ENCODE measurements at regions of chr10 and their contacts with region 1.

Region 1: GRCh38 chr10:96017191-96017687 is 26.1 kb upstream of the CCNJ start:
- DNase-seq: peak in 3 of 5 donors; percentile 2 to 45 (median 20)
- H3K4me3 ChIP-seq: no peak overlapping the region
- H3K4me3 Mint-ChIP-seq: no peak overlapping the region
- H3K27ac ChIP-seq: no peak overlapping the region
- H3K27ac Mint-ChIP-seq: no peak overlapping the region
- H3K4me1 ChIP-seq: no peaks in the 10 kb centered on the region
- H3K4me1 Mint-ChIP-seq: peaks cover 0 to 4% (median 0%) of the 10 kb centered on the region in 3 donors
- H3K27me3 ChIP-seq: no peaks in the 10 kb centered on the region
- H3K27me3 Mint-ChIP-seq: peaks cover 5 to 10% of the 10 kb centered on the region in 2 donors

Region 2: DNA sequence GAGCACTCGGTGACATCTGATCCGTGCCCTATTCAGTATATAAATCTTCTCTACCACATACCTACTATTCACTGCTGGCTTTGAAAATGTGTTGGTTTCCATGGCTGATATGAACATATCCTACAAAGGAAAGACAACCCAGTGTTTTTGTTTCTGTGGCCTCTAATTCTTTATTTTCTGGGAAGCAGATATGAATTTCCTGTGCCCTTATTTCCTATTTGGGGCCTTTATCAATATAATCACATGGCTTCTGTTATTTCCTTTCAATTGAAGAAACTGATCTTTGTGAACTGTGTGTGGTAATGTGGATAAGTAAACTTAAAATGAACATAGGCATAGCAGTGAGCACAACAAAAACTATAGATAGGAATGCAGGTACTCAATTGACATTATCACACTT is 36.7 kb after region 1 on chr10:
- CTCF ChIA-PET with region 1: no interaction called
- POLR2A ChIA-PET with region 1: no interaction called
- DNase-seq: no peak
- H3K4me3 ChIP-seq: no peak overlapping the region
- H3K4me3 Mint-ChIP-seq: no peak overlapping the region
- H3K27ac ChIP-seq: no peak overlapping the region
- H3K27ac Mint-ChIP-seq: no peak overlapping the region
- H3K4me1 ChIP-seq: no peaks in the 10 kb centered on the region
- H3K4me1 Mint-ChIP-seq: peaks cover 17 to 32% (median 20%) of the 10 kb centered on the region in 3 donors
- H3K27me3 ChIP-seq: no peaks in the 10 kb centered on the region
- H3K27me3 Mint-ChIP-seq: no peaks in the 10 kb centered on the region

Region 3: DNA sequence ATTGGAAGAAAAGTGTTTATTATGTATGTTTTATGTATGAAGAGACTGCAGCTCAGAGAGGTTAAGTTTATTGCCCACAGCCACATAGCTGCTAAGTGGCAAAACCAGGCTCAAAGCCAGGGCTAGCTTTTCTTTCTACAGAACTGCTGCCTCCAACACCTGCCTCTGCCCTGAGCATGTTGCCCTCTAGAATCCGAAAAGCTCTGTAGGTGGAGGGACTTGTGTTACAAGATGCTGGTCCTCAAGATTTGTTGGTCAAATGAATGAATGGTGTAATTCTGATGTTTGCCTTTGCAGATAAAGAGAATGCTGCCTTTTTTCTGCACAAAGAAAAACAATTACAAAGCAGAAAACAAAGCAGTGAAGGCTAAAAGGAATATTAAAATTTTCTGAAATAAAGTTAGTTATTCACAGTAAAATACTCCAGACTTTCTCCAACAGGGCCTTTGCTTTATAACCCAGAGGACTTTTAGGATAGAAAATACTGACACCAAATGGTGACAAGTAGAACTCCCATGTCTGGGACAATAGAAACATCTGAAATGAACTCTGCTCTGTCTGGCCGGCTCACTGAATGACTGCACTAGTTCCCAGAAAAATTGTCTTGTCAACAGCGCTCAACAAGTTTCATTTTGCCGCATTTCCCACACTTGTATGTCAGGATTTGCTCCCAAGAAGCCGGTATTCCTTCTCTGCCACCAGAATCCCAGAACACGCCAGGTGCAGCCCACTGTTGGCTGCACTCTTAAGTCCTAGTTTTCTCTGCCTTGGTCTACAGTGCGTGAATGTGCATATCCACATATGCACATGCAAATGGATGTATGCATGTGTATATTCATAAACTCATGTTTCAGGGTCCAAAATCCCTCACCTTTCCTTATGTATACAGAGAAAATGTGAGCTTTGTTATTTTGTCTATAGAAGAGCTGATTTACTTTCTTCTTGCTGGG is 276.0 kb after region 1 on chr10:
- CTCF ChIA-PET with region 1: interaction called, 10 read pairs
- POLR2A ChIA-PET with region 1: no interaction called
- DNase-seq: peak in 1 of 5 donors; percentile 24
- H3K4me3 ChIP-seq: no peak overlapping the region
- H3K4me3 Mint-ChIP-seq: no peak overlapping the region
- H3K27ac ChIP-seq: no peak overlapping the region
- H3K27ac Mint-ChIP-seq: no peak overlapping the region
- H3K4me1 ChIP-seq: peaks cover 17% of the 10 kb centered on the region
- H3K4me1 Mint-ChIP-seq: peaks cover 0 to 2% (median 1%) of the 10 kb centered on the region in 3 donors
- H3K27me3 ChIP-seq: no peaks in the 10 kb centered on the region
- H3K27me3 Mint-ChIP-seq: peaks cover 2 to 46% of the 10 kb centered on the region in 2 donors

Region 4: DNA sequence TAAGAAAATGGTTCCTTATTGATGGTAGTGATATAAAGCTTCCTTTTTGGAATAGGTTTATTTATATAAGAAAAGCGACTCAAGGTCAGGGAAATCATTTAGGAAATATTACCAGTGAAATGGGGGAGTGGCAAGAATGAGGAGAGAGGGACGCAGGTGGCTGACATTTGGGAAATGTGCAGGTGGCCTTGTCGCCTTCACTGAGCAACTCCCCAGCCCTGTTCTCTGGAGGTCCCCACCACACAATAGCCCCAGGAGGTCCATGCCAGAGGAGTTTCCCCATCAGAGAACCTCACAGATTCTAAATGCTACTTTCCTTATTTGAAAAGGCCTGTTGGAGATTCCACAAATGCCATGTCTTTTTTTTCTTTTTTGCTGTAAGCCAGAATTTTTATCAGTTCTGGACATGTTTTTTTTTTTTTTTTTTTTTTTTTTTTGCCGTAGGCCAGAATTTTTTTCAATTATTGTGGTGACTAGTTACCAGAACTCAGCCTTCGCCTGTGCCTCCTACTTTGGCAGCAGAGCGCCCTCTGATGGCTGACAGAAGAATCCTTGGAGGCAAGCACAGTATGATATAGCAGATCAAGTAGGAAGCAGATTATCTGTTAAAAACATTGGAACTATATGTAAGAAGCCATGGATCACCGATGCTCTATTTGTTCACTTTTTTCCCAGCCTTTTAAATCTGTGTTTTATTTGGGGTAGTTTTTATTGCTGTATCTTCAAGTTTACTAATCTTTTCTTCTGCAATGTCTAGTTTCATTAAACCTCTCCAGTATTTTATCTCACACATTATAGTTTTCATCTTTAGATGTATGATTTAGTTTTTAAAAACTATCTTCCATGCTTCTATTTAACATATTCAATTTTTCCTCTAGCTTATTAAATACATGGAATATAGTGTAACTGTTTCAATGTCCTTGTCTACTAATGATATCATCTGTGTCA is 323.0 kb after region 1 on chr10:
- CTCF ChIA-PET with region 1: interaction called, 14 read pairs
- POLR2A ChIA-PET with region 1: no interaction called
- DNase-seq: peak in 4 of 5 donors; percentile 14 to 62 (median 33)
- H3K4me3 ChIP-seq: no peak overlapping the region
- H3K4me3 Mint-ChIP-seq: no peak overlapping the region
- H3K27ac ChIP-seq: no peak overlapping the region
- H3K27ac Mint-ChIP-seq: no peak overlapping the region
- H3K4me1 ChIP-seq: no peaks in the 10 kb centered on the region
- H3K4me1 Mint-ChIP-seq: no peaks in the 10 kb centered on the region
- H3K27me3 ChIP-seq: no peaks in the 10 kb centered on the region
- H3K27me3 Mint-ChIP-seq: peaks cover 7 to 17% of the 10 kb centered on the region in 2 donors